ENCODE measurements at regions of chr1 and their contacts with region 1.

Region 1: GRCh38 chr1:181142096-181142958 is 53.8 kb downstream of the IER5 start:
- DNase-seq: peak; percentile 81 to 98 (median 95)

Region 2: DNA sequence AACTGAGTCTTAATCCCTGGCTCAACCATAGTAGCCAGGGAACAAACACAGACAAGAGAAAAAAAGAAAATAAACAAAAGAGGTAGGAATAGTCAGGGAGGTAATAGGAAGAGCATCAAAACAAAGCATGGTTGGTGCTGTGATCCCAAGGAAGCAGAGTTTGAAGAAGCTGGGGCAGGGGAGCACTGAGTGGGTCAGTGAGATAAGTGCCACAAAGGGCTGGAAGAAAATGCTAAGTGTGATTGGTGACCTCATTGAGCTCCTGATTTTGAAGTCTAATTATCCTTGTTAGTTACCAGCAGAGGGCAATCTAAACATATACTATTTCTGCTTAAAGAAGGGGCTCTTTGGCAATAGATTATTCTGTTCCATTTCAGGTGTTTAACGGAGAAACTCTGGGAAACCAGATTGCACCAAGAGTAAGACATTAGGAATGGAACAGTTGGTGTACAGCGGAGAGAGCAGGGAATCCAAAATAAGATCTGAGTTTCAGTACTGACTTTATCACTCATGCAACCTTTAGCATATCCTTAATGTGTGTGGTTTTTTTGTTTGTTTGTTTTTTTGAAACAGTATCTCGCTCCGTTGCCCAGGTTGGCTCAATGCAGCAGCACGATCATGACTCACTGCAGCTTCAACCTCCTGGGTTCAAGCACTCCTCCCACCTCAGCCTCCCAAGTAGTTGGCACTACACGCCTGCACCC is 260.4 kb before region 1 on chr1:
- intact Hi-C with region 1: loop called (anchors 5 kb)
- DNase-seq: peak in 2 of 42 donors; percentile 10 to 12

Region 3: GRCh38 chr1:181033799-181034451 is 108.4 kb before region 1 on chr1 and contains the start of gene MR1:
- intact Hi-C with region 1: loop called (anchors 5 kb)
- DNase-seq: peak in 18 of 42 donors; percentile 14 to 64 (median 42)

Region 4: GRCh38 chr1:181088079-181089016 is 54.0 kb before region 1 on chr1 and contains the start of gene IER5:
- intact Hi-C with region 1: loop called (anchors 5 kb)
- DNase-seq: peak; percentile 92 to 98 (median 96)

Region 5: DNA sequence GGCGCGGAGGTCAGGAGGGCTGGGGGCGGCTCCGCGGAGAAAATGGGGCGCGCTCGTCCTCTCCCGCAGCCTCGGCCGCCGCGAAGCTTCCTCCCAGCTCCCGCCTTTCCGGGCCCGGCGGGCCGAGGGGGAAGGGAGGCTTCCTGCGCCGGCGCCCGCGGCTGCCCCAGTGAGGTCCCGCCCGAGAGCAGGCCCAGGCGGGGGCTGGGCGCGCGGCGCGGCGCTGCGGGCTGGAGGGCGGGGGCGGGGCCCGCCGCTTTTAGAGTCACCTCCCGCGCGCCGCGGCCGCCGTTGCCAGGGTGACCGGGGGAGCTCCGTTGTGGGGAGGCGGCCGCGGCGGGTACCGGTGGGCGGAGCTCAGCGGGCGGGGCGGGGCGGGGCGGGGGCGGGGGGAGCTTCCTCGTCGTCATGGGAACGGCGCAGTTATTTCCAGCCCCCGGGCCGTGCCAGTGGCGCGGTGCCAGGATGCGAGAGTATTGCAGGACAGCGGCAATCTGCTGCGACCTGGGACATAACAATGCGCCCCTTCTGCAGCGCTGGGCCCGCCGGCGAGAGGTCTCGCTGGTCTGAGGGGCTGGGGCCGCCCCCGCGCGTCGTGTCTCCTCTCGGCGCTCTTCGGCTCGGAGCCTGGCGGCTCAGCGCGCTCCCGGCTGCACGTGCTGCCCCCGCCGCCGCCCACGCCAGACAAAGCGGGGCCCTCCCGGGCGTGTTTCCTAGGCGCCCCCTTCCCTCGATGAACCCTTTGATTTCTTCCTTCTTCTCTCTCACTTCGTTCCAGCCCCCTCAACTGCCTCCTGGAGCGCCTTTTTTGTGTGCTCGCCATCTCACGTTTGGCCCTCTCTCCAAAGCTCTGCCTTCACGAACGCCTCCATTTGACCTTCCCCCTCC is 36.9 kb before region 1 on chr1:
- intact Hi-C with region 1: loop called (anchors 5 kb)
- DNase-seq: peak; percentile 77 to 97 (median 94)